IMR-90 (cell line): ENCODE measurements at regions of chr20 and their contacts with region 1.

Region 1: DNA sequence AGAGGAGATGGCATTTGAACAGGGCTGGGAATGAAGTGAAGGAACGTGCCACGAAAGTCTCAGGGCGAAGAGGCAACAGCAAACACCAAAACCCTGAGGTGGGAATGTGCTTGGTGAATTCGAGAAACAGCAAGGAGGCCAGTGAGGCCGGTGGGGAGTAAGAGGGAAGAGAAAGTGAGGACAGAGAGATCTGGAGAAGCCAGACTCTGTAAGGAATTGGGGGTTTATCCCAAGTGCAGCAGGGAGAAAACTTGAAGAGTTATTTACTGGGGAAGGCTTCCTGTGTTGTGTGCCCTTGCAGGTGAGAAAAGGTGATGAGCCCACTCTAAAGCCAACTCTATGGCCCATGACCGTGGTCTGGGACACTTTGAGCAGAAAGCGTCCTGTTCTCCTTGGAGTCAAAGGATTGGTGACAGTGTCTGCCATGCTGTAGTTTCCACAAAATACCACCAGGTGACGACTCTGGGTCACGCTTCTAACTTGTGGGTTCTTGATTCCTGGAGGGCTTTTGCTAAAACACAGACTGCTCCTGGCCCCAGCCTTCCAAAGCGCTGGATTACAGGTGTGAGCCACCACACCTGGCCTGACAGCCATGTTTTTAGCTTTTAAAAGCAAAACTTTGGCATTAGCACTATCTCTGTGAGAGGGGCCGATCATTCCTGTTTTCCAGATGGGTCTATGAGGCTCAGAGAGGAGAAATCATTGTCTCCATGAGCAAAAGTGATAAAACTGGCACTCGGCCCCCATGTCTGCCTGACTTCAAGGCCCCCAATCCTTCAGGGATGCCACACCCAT is 18.0 kb upstream of the CSNK2A1 start:
- DNase-seq: peak; percentile 63
- ATAC-seq: peak; percentile 99
- H3K4me3 ChIP-seq: no peak overlapping the region
- H3K27ac ChIP-seq: no peak overlapping the region
- H3K4me1 ChIP-seq: no peaks in the 10 kb centered on the region
- H3K27me3 ChIP-seq: peaks cover 33% of the 10 kb centered on the region
- CTCF ChIP-seq: peak; percentile 97
- POLR2A ChIP-seq: no peak
- RAD21 ChIP-seq: peak; percentile 93

Region 2: GRCh38 chr20:645318-646106 is 83.9 kb after region 1 on chr20:
- CTCF ChIA-PET with region 1: interaction called, 5 read pairs
- POLR2A ChIA-PET with region 1: no interaction called
- dilution Hi-C with region 1: no loop called
- in situ Hi-C with region 1: loop called (anchors 5 kb)
- intact Hi-C with region 1: loop called (anchors 1 kb)
- DNase-seq: peak; percentile 57
- ATAC-seq: peak; percentile 87
- H3K4me3 ChIP-seq: no peak overlapping the region
- H3K27ac ChIP-seq: no peak overlapping the region
- H3K4me1 ChIP-seq: no peaks in the 10 kb centered on the region
- H3K27me3 ChIP-seq: no peaks in the 10 kb centered on the region; the same call in 1 of the 2 replicates
- CTCF ChIP-seq: peak; percentile 89
- POLR2A ChIP-seq: no peak
- RAD21 ChIP-seq: peak; percentile 77

Region 3: DNA sequence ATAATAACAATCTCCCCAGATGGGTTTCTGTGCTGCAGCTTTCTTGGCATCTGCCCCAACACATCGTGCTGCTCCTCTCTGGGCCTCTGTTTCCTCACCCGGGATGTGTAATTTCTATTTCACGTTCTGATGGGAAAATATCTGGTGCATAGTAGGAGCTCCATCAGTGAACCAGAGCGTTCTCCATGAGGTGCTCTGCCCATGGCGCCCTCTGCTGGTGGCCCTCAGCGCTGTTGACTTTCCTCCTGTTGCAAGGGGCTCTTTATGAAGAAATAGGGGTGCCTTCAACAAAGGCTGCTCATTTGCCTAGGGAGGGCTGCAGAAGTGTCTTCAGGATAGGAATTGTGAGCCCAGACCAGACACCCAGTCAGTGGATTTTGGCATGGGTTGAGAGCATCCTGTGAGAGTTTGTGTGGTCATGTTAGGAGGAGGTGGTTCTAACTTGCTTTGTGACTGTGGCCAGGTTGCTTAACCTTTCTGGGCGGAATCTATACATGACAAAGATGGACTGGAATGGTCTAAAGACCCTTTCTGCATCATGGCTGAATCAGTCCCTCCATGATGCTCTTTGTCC is 105.8 kb after region 1 on chr20:
- CTCF ChIA-PET with region 1: interaction called, 4 read pairs
- POLR2A ChIA-PET with region 1: no interaction called
- dilution Hi-C with region 1: no loop called
- in situ Hi-C with region 1: loop called (anchors 10 kb)
- intact Hi-C with region 1: loop called (anchors 1 kb)
- DNase-seq: peak; percentile 34
- ATAC-seq: peak; percentile 68
- H3K4me3 ChIP-seq: no peak overlapping the region
- H3K27ac ChIP-seq: no peak overlapping the region
- H3K4me1 ChIP-seq: no peaks in the 10 kb centered on the region
- H3K27me3 ChIP-seq: peaks cover 86% of the 10 kb centered on the region
- CTCF ChIP-seq: peak; percentile 70
- POLR2A ChIP-seq: no peak
- RAD21 ChIP-seq: peak; percentile 56

Region 4: GRCh38 chr20:675453-676314 is 114.0 kb after region 1 on chr20 and contains the start of gene SCRT2:
- CTCF ChIA-PET with region 1: interaction called, 3 read pairs
- POLR2A ChIA-PET with region 1: no interaction called
- dilution Hi-C with region 1: no loop called
- in situ Hi-C with region 1: loop called (anchors 10 kb)
- intact Hi-C with region 1: no loop called
- DNase-seq: peak; percentile 65
- ATAC-seq: peak; percentile 100
- H3K4me3 ChIP-seq: no peak within 1 kb of the TSS
- H3K27ac ChIP-seq: no peak within 1 kb of the TSS
- H3K4me1 ChIP-seq: no peaks in the 10 kb centered on the region
- H3K27me3 ChIP-seq: peaks cover 55% of the 10 kb centered on the region
- CTCF ChIP-seq: no peak
- POLR2A ChIP-seq: no peak
- RAD21 ChIP-seq: no peak
- total RNA-seq, gene SCRT2: not detected in 2 replicates

Region 5: DNA sequence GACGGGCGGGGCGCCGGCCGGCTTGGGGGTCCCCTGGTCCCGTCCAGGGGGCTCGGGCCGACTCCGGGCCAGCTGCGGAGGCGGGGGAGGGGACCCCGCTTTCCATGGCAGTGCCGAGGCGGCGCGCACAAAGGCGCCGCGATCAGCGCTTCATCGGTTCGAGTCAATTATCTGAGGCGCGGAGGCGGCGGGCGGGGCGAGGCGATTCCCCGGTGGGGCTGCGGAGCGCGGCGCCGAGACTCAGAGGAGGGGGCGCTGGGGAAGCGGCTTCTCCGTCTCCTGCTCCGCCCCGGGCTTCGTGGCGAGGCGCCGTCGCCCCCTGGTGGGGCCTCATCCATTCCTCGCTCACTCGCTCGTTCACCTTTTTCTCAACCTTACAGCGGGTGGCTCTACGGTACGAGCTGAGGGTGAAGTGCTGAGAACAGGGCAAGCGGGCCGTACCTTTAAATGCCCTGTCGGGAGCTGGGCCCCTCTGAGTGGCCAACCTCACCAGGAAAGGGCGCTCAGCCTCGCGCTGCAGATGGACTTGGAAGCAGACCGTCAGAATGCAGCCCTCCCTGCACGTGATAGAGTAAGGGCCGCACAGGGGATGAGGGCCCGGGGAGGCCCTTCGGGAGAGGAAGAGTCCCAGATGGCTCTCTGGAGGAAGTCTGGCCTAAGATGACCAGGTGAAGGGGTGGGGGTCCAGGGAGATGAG is 166.8 kb after region 1 on chr20:
- CTCF ChIA-PET with region 1: no interaction called
- POLR2A ChIA-PET with region 1: no interaction called
- dilution Hi-C with region 1: no loop called
- in situ Hi-C with region 1: no loop called
- intact Hi-C with region 1: loop called (anchors 1 kb)
- DNase-seq: peak; percentile 18
- ATAC-seq: peak; percentile 91
- H3K4me3 ChIP-seq: peak overlapping the region; percentile 15; the same call in 1 of the 2 replicates
- H3K27ac ChIP-seq: no peak overlapping the region
- H3K4me1 ChIP-seq: no peaks in the 10 kb centered on the region
- H3K27me3 ChIP-seq: peaks cover 43% of the 10 kb centered on the region
- CTCF ChIP-seq: peak; percentile 63
- POLR2A ChIP-seq: no peak
- RAD21 ChIP-seq: peak; percentile 65

Region 6: DNA sequence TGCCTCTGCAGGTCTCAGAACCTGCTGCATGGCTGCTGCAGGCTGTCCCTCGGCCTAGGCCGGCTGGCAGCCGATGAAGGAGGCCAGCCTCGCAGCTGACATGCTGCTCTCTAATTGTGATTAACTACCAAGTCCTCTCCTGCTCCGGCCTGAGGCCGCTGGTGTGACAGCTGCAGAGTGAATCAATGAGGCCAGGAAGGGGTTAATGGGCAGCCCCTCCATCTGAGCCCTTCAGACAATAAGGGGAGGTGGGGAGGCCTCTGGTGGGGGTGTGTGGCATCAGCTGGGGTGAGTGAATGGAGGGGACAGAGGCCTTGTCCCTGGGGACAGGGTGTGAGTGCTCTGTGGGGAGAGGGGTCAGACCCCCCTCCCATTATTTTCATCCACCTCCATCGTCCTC is 172.2 kb after region 1 on chr20:
- CTCF ChIA-PET with region 1: interaction called, 30 read pairs
- POLR2A ChIA-PET with region 1: no interaction called
- dilution Hi-C with region 1: no loop called
- in situ Hi-C with region 1: loop called (anchors 5 kb)
- intact Hi-C with region 1: loop called (anchors 1 kb)
- DNase-seq: no peak
- ATAC-seq: no peak
- H3K4me3 ChIP-seq: no peak overlapping the region
- H3K27ac ChIP-seq: no peak overlapping the region
- H3K4me1 ChIP-seq: no peaks in the 10 kb centered on the region
- H3K27me3 ChIP-seq: peaks cover 17% of the 10 kb centered on the region
- CTCF ChIP-seq: no peak
- POLR2A ChIP-seq: no peak
- RAD21 ChIP-seq: no peak

Region 7: GRCh38 chr20:740141-740540 is 178.5 kb after region 1 on chr20:
- CTCF ChIA-PET with region 1: interaction called, 30 read pairs
- POLR2A ChIA-PET with region 1: no interaction called
- dilution Hi-C with region 1: no loop called
- in situ Hi-C with region 1: loop called (anchors 5 kb)
- intact Hi-C with region 1: loop called (anchors 1 kb)
- DNase-seq: no peak
- ATAC-seq: no peak
- H3K4me3 ChIP-seq: no peak overlapping the region
- H3K27ac ChIP-seq: no peak overlapping the region
- H3K4me1 ChIP-seq: no peaks in the 10 kb centered on the region
- H3K27me3 ChIP-seq: peaks cover 10% of the 10 kb centered on the region
- CTCF ChIP-seq: no peak
- POLR2A ChIP-seq: no peak
- RAD21 ChIP-seq: no peak